Esophagus squamous epithelium (tissue), 5 donors: ENCODE measurements at regions of chr19 and their contacts with region 1.

Region 1: GRCh38 chr19:13861732-13862531 is 15.0 kb upstream of the NANOS3 start:
- DNase-seq: no peak
- H3K4me3 ChIP-seq: peak overlapping the region; percentile 29 to 58 (median 53)
- H3K27ac ChIP-seq: peak overlapping the region; percentile 84 to 95 (median 93)
- H3K4me1 ChIP-seq: peaks cover 17 to 64% (median 20%) of the 10 kb centered on the region in 3 donors
- H3K27me3 ChIP-seq: peaks cover 0 to 19% (median 0%) of the 10 kb centered on the region in 4 donors
- CTCF ChIP-seq: peak; percentile 99 to 100 (median 99)
- POLR2A ChIP-seq: peak in 2 of 4 donors; percentile 21 to 46

Region 2: GRCh38 chr19:13597640-13598039 is 264.3 kb before region 1 on chr19:
- intact Hi-C with region 1: loop called (anchors 10 kb)
- DNase-seq: no peak
- H3K4me3 ChIP-seq: no peak overlapping the region
- H3K27ac ChIP-seq: no peak overlapping the region
- H3K4me1 ChIP-seq: no peaks in the 10 kb centered on the region
- H3K27me3 ChIP-seq: peaks cover 0 to 21% (median 0%) of the 10 kb centered on the region in 4 donors
- CTCF ChIP-seq: peak; percentile 28 to 68 (median 56)
- POLR2A ChIP-seq: no peak

Region 3: GRCh38 chr19:13784731-13785452 is 77.0 kb before region 1 on chr19:
- intact Hi-C with region 1: loop called (anchors 2 kb)
- DNase-seq: no peak
- H3K4me3 ChIP-seq: peak overlapping the region in 1 of 4 donors; percentile 34
- H3K27ac ChIP-seq: peak overlapping the region; percentile 24 to 52 (median 50)
- H3K4me1 ChIP-seq: peaks cover 18 to 83% (median 43%) of the 10 kb centered on the region in 3 donors
- H3K27me3 ChIP-seq: no peaks in the 10 kb centered on the region
- CTCF ChIP-seq: peak; percentile 57 to 83 (median 73)
- POLR2A ChIP-seq: no peak

Region 4: DNA sequence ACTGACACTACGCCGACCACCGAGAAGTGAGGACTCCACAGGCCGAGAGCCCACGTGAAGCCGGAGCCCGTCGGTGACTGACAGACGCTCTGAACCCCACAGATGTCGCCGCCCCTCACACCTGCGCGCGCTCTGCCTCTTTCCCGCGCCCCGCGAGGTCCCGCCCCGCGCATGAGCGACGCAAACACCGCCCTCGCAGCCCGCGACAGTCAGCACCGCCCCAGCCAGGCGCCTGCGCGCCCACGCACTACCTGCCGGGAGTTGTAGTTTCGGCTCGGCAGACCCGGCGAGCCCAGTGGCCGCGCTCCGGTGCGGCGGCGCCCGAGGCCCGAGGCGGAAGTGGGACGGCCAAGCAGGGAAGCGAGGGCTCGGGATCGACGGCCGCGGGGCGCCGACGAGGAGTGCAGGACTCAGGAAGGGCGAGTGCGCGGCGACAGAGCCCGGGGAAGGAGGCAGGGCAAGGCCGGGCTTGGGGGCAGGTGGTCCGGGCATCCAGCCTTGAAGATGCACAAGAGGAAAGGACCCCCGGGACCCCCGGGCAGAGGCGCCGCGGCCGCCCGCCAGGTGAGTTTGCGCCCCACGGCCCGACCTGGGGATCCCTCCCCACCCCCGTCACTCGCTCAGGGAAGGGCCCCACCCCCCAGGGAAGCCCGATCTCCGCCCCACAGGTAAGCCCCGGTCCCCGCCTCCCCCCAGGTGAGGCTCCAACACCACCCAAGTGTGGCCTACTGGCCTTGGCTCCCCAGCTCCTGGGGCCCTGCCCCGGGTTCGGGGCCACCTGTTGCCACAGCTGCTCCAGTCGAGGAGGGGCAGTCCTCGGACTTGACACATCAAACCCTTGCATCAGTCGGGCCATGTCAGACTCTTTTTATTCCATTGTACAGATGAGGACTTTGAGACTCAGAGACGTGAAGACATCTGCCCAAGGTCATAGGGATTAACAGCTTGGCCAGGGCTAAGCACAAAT is 44.3 kb after region 1 on chr19 and contains the starts of genes BRME1 and CC2D1A:
- intact Hi-C with region 1: no loop called
- DNase-seq: peak; percentile 53
- H3K4me3 ChIP-seq: peak within 1 kb of the TSS; percentile 77 to 98 (median 84)
- H3K27ac ChIP-seq: peak within 1 kb of the TSS; percentile 85 to 96 (median 91)
- H3K4me1 ChIP-seq: peaks cover 13 to 29% (median 15%) of the 10 kb centered on the region in 3 donors
- H3K27me3 ChIP-seq: no peaks in the 10 kb centered on the region
- CTCF ChIP-seq: peak in 2 of 6 experiments; percentile 28 to 42
- POLR2A ChIP-seq: peak in 3 of 4 donors; percentile 47 to 69 (median 52)
- total RNA-seq, gene BRME1: 1.8 to 6.3 (median 4.0) TPM
- total RNA-seq, gene CC2D1A: 28.0 to 56.9 (median 36.0) TPM

Region 5: GRCh38 chr19:13959962-13960862 is 98.3 kb after region 1 on chr19:
- intact Hi-C with region 1: no loop called
- DNase-seq: no peak
- H3K4me3 ChIP-seq: no peak overlapping the region
- H3K27ac ChIP-seq: no peak overlapping the region
- H3K4me1 ChIP-seq: peaks cover 0 to 20% (median 0%) of the 10 kb centered on the region in 3 donors
- H3K27me3 ChIP-seq: no peaks in the 10 kb centered on the region
- CTCF ChIP-seq: peak in 1 of 6 experiments; percentile 19
- POLR2A ChIP-seq: no peak